Activated naive CD4-positive, alpha-beta T cell treated with anti-CD3 and anti-CD28 coated beads for 36 hours (primary cell): ENCODE measurements at regions of chrX and their contacts with region 1.

Region 1: GRCh38 chrX:24513416-24513815 is 48.3 kb downstream of the PDK3 start:
- DNase-seq: peak; percentile 75
- H3K4me3 Mint-ChIP-seq: no peak overlapping the region
- H3K27ac Mint-ChIP-seq: peak overlapping the region; percentile 58
- H3K4me1 Mint-ChIP-seq: peaks cover 16% of the 10 kb centered on the region
- H3K27me3 Mint-ChIP-seq: no peaks in the 10 kb centered on the region

Region 2: DNA sequence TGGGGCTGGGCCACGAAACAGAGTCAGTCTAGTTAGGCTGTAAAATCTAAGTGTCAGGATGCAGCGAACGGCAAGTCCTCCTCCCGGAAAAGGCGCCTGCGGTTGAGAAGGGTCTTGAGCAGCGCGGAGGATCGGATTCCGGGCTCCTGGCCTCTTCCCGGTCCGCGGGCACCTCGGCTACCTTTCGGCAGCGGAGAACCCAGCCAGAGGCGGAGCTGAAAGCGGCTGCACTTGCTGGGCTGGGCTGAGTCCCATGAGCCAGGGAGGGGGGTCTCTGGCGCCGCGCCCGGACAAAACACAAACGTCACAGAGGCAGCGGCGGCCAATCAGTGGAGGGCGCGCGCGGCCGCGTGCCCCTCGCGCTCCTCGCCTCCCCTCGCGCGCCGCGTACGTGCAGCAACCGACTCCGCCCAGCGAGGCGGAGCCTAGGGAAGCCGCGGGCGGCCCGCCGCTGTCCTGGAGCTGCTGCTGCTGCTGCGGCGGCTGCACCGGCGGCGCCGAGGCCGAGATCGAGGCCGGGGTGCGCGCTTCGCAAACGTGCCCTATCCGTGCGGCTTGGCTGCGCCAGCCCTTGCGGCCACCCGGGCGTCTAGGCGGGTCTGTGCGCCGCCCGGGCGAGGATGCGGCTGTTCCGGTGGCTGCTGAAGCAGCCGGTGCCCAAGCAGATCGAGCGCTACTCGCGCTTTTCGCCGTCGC is 48.4 kb before region 1 on chrX and contains the start of gene PDK3:
- CTCF ChIA-PET with region 1: no interaction called
- intact Hi-C with region 1: loop called (anchors 2 kb)
- DNase-seq: peak; percentile 85
- H3K4me3 Mint-ChIP-seq: peak within 1 kb of the TSS; percentile 81
- H3K27ac Mint-ChIP-seq: peak within 1 kb of the TSS; percentile 82
- H3K4me1 Mint-ChIP-seq: peaks cover 30% of the 10 kb centered on the region
- H3K27me3 Mint-ChIP-seq: no peaks in the 10 kb centered on the region
- total RNA-seq, gene PDK3: 31.7 to 32.3 TPM

Region 3: GRCh38 chrX:24498975-24499374 is 14.4 kb before region 1 on chrX:
- CTCF ChIA-PET with region 1: no interaction called
- intact Hi-C with region 1: loop called (anchors 1 kb)
- DNase-seq: no peak
- H3K4me3 Mint-ChIP-seq: no peak overlapping the region
- H3K27ac Mint-ChIP-seq: no peak overlapping the region
- H3K4me1 Mint-ChIP-seq: peaks cover 24% of the 10 kb centered on the region
- H3K27me3 Mint-ChIP-seq: no peaks in the 10 kb centered on the region

Region 4: DNA sequence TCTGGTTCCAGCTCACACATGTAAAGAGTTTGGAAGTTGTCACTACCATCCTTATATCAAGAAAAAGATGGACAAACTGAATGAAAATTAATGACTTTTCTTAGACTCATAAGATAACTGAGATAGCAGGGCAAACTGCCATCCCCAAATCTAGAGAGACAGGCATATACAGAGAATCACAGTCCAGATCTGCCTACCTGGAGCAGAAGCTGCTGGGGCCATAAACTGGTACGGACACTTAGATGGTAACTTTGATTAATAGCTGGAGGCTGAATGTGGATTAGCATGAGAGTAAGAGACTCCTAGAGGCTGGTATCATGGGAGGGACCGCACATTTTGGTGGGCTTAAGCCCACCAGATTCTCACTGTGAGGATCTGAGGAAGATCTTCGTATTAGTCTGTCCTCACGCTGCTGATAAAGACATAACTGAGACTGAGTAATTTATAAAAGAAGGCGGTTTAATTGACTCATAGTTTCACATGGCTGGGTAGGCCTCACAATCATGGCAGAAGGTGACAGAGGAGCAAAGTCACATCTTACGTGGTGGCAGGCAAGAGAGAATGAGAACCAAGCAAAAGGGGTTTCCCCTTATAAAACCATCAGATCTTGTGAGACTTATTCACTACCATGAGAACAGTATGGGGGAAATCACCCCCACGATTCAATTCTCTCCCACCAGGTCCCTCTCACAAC is 169.5 kb after region 1 on chrX:
- CTCF ChIA-PET with region 1: no interaction called
- intact Hi-C with region 1: loop called (anchors 2 kb)
- DNase-seq: peak; percentile 72
- H3K4me3 Mint-ChIP-seq: no peak overlapping the region
- H3K27ac Mint-ChIP-seq: peak overlapping the region; percentile 59
- H3K4me1 Mint-ChIP-seq: peaks cover 19% of the 10 kb centered on the region
- H3K27me3 Mint-ChIP-seq: peaks cover 6% of the 10 kb centered on the region